ENCODE measurements at regions of chr2 and their contacts with region 1.

Region 1: DNA sequence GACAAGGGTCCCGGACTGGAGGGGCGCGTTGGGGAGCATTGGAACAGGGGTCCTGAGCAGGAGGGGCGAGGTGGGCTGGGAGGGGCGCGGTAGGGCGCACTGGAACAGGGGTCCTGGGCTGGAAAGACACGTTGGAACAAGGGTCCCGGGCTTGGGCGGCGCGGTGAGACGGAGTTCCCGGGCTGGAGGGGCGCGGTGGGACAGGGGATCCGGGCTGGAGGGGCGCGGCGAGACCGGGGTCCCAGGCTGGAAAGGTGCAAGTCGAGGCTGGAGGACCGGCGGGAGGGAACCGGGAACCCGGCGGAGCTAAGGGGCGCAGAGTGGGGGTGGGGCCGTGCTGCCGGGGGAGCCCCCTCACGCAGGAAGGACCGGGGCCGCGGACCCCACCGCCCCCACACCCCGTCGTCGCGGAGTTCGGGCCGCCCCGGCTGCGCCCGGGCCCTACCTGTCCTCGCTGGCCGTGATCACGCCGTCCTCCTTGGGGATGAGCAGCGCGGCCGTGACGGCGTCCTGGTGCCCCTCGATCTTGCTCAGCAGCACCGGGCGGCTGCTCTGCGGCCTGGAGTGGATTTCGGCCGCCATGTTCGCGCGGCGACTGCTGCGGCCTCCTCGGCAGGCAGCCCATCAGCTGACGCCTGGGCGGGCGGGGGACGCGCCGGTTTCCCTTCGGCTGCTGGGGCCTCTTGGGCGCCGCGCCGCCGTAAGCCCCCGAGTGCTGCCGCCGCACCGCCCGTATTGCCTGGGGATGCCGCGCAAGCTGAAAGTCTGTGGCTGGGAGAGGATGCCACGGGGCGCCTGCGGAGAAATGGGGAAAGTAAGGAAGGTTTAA is at the start of gene WDFY1:
- DNase-seq: peak; percentile 84
- H3K4me3 ChIP-seq: peak within 1 kb of the TSS; percentile 71 to 99 (median 93)
- H3K27ac ChIP-seq: peak within 1 kb of the TSS; percentile 74
- H3K4me1 ChIP-seq: peaks cover 21% of the 10 kb centered on the region
- H3K27me3 ChIP-seq: no peaks in the 10 kb centered on the region
- CTCF ChIP-seq: no peak
- total RNA-seq, gene WDFY1: 55.6 to 96.0 TPM

Region 2: DNA sequence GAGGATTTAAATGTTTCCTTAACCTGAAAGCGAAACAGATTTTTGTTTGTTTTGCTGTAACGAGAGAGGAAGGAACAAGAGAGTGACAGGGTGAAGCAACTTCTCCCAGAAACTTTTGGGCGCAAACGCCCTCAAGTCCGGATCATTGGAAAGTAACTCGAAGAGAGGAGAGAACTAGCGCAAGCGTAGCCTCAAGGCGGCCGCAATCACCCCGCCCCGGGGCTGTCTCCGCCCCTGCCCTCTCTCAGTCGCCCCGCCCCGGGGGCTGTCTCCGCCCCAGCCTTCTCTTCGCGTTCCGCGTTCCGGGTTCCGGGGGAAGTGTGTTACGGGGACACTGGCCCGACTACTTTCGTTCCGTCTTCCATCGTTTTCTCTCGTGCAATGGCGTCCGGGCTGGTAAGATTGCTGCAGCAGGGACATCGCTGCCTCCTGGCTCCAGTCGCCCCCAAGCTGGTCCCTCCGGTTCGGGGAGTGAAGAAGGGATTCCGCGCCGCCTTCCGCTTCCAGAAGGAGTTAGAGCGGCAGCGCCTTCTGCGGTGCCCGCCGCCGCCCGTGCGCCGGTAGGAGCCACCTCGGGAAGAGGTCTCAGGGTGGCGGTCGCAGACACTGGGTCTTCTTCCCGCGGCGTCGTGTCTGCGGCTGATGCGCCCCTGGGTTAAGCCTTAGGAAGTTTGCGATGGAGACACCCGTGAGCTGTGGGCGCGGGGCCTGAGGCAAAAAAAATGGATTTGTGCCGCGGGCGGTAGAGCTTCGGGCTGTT is 12.4 kb after region 1 on chr2 and contains the start of gene MRPL44:
- CTCF ChIA-PET with region 1: no interaction called
- dilution Hi-C with region 1: no loop called
- in situ Hi-C with region 1: no loop called
- intact Hi-C with region 1: loop called (anchors 1 kb)
- DNase-seq: peak; percentile 94
- H3K4me3 ChIP-seq: peak within 1 kb of the TSS; percentile 95 to 99 (median 98)
- H3K27ac ChIP-seq: peak within 1 kb of the TSS; percentile 79
- H3K4me1 ChIP-seq: peaks cover 45% of the 10 kb centered on the region
- H3K27me3 ChIP-seq: no peaks in the 10 kb centered on the region
- CTCF ChIP-seq: no peak
- total RNA-seq, gene MRPL44: 24.2 to 27.2 TPM

Region 3: GRCh38 chr2:223976635-223977226 is 31.8 kb after region 1 on chr2:
- CTCF ChIA-PET with region 1: no interaction called
- dilution Hi-C with region 1: no loop called
- in situ Hi-C with region 1: no loop called
- intact Hi-C with region 1: no loop called
- DNase-seq: peak; percentile 35
- H3K4me3 ChIP-seq: no peak overlapping the region
- H3K27ac ChIP-seq: no peak overlapping the region
- H3K4me1 ChIP-seq: peaks cover 5% of the 10 kb centered on the region
- H3K27me3 ChIP-seq: no peaks in the 10 kb centered on the region
- CTCF ChIP-seq: no peak

Region 4: DNA sequence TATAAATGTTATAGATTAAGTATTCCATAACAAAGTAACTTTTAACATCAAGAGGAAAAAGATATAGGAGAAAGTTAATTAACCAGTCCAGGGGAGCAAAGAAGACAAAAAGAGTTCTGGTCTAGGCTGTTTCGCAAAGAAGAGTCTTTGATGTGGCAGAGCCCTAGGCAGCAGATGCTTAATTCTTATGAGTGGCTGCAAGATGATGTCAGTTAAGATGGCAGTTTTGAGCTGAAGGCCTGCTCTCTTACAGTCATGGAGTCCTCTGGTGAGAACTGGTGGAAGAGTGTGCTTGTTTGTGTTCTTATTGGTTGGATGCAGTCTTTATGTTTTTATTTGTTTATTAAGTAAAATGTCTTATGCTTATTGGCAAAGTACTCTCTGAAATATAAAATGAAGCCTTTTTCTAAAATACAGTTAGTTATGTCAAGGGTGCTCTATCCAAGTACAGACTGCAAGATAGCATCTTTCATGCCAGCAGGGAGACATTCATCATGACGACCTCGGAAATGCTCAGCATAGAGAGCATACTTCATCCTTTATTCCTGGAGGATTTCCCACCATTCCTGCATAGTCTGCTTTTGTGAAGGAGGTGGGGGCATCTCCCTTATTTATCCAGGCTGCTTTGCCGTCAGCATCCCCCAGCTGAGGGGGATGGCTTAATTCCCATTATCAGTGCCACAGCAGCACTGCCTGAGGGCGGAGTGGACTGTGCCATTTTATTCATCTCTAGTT is 133.0 kb after region 1 on chr2:
- CTCF ChIA-PET with region 1: no interaction called
- dilution Hi-C with region 1: no loop called
- in situ Hi-C with region 1: no loop called
- intact Hi-C with region 1: no loop called
- DNase-seq: no peak
- H3K4me3 ChIP-seq: no peak overlapping the region
- H3K27ac ChIP-seq: no peak overlapping the region
- H3K4me1 ChIP-seq: no peaks in the 10 kb centered on the region
- H3K27me3 ChIP-seq: no peaks in the 10 kb centered on the region
- CTCF ChIP-seq: no peak

Measured in mammary epithelial cell (primary cell).